Panc1 (cell line): ENCODE measurements at regions of chr2 and their contacts with region 1.

Region 1: GRCh38 chr2:49640630-49641029 is 486.3 kb upstream of the FSHR start:
- DNase-seq: no peak
- ATAC-seq: no peak
- H3K4me3 ChIP-seq: no peak overlapping the region
- H3K27ac ChIP-seq: no peak overlapping the region
- H3K4me1 ChIP-seq: no peaks in the 10 kb centered on the region
- H3K27me3 ChIP-seq: no peaks in the 10 kb centered on the region
- CTCF ChIP-seq: no peak

Region 2: DNA sequence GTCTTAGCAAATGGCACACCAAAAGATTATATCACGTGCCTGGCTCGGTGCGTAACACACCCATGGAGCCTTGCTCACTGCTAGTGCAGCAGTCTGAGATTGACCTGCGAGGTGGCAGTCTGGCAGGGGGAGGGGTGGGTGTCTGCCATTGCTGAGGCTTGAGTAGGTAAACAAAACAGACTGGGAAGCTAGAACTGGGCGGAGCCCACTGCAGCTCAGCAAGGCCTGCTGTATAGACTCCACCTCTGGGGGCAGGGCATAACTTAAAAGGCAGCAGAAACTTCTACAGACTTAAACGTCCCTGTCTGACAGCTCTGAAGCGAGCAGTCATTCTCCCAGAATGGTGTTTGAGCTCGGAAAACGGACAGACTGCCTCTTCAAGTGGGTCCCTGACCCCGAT is 430.4 kb before region 1 on chr2:
- CTCF ChIA-PET with region 1: no interaction called
- POLR2A ChIA-PET with region 1: no interaction called
- in situ Hi-C with region 1: no loop called
- intact Hi-C with region 1: no loop called
- DNase-seq: no peak
- ATAC-seq: no peak
- H3K4me3 ChIP-seq: no peak overlapping the region
- H3K27ac ChIP-seq: no peak overlapping the region
- H3K4me1 ChIP-seq: no peaks in the 10 kb centered on the region
- H3K27me3 ChIP-seq: no peaks in the 10 kb centered on the region
- CTCF ChIP-seq: no peak

Region 3: DNA sequence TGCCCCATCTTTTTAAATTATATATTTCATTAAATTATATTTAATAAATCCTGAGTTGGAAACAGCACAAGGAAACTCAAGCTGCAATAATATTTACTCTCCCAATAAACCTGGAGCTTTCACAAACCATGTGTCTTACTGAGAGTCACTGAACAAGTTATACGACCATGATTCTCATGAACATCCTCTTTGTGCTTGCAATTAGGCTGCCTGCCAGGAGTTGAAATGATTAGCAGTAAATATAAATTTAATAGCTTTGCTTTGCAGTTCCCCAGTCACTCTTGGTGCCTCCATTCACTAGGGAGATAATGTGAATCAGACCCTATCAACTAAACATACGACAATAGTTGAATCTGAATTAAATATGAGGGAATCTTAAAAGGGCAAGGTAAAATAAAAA is 486.2 kb after region 1 on chr2:
- CTCF ChIA-PET with region 1: interaction called, 11 read pairs
- POLR2A ChIA-PET with region 1: no interaction called
- in situ Hi-C with region 1: no loop called
- intact Hi-C with region 1: no loop called
- DNase-seq: no peak
- ATAC-seq: no peak
- H3K4me3 ChIP-seq: no peak overlapping the region
- H3K27ac ChIP-seq: no peak overlapping the region
- H3K4me1 ChIP-seq: no peaks in the 10 kb centered on the region
- H3K27me3 ChIP-seq: no peaks in the 10 kb centered on the region
- CTCF ChIP-seq: no peak